AG04449 (cell line): ENCODE measurements at regions of chr17 and their contacts with region 1.

Region 1: DNA sequence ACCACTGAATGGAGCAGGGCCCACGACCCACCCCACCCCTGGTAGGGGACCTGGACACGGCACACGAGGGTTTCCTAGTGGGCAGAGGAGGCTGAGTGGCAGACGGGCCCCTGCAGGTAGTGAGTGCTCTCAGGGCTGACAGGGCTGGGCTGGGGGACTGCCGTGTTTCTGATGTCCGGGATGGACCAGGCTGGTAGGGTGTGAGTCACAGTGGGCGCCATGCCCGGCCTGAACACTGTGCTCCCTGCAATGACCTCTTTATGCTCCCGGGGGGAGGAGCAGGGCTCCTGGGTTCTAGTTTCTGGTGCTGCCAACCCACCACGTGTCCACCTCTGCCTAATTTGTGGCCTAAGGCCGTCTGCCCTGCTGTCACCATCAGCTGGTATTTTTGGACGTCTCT is 26.3 kb downstream of the ARHGAP23 start:
- DNase-seq: no peak
- H3K4me3 ChIP-seq: peak overlapping the region; percentile 77
- CTCF ChIP-seq: no peak

Region 2: DNA sequence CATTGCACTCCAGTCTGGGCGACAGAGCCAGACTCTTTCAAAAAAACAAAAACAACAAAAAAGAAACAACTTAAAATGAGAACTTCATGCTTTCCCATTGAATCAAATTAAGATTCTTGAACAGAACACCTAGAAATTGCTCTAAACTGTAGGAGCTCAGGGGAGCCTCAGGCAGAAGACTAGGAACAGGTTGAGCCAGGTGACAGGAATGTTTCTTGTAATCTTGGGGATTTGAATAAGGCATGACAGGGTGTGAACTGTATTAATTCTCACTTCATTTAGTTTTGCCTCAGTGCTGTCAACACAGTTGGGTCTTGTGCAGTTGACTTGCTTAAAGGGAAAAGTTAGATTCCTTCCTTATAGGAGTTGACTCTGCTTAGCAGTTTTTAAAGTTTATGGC is 75.1 kb before region 1 on chr17:
- CTCF ChIA-PET with region 1: no interaction called
- POLR2A ChIA-PET with region 1: no interaction called
- DNase-seq: no peak
- H3K4me3 ChIP-seq: no peak overlapping the region
- CTCF ChIP-seq: no peak

Region 3: GRCh38 chr17:38405654-38406053 is 48.9 kb before region 1 on chr17:
- CTCF ChIA-PET with region 1: no interaction called
- POLR2A ChIA-PET with region 1: no interaction called
- DNase-seq: no peak
- H3K4me3 ChIP-seq: no peak overlapping the region
- CTCF ChIP-seq: no peak

Region 4: GRCh38 chr17:38464723-38465390 is 10.3 kb after region 1 on chr17:
- CTCF ChIA-PET with region 1: interaction called, 14 read pairs
- POLR2A ChIA-PET with region 1: interaction called, 43 read pairs
- DNase-seq: peak; percentile 74
- H3K4me3 ChIP-seq: peak overlapping the region; percentile 66
- CTCF ChIP-seq: no peak